ENCODE measurements at regions of chr1 and their contacts with region 1.

Region 1: DNA sequence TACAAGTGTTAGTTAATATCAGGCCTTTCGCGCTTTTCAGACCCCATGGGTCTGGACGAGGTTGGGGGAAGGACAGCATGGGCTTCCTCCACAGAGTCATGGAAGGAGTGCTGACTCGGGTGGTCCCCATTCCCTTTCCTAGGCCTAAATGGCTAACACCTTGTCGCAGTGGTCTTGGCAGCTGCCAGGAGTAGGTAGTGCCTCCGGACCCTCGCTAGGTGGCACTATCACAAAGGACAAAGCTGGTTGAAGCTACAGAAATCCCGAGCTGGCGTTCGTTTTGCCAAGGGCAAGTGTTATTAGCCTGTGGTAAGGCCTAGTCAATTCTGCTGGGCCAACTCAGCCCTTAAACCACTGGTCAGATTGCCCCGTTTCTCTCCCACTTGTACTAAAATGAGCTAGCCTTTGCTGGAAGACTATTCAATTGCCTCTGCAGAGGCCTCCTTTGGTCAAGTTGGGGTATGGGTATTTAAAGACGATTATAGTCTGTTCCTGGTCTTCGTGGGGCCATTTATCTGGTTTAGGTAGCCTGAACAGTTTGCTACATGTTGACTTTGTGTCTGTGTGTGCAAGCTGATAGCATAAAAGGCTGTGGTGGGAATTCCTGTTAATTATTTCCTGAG is 1.1 kb upstream of the UBE2Q1 start:
- DNase-seq: peak; percentile 85
- ATAC-seq: peak; percentile 80

Region 2: DNA sequence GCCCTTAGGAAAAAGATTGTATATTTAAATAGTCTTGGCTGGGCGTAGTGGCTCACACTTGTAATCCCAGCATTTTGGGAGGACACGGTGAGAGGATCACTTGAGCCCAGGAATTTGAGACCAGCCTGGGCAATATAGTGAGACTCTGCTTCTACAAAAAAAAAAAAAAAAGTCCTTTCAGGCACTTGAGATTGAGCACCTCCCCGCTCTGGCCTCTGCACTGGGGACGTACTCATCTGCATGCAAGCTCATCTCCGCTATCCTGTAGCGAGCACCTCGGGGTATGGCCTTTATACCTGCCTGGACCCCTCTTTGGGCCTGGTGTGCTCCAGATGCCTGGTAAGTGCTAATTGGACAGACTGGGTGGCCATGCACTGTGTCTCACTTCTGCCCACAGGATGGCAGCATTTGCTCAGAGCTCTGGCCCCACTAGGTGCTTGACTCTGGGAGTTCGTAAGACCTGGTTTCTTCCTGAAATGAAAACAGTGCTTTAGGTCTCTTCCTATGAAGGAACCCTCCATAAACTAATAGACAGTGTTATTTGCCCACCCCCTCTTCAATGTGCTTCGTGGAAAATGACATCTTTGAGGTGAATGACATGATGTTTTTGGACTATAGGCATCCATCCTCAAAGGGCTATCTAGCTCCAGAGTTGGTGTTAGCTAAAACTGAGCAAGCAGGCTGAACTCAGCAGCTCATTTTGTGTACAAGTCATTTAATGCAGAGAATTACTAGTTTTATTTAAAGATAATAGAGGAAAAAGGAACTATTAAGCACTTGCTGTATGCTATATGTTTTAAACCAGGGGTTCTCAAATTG is 110.1 kb after region 1 on chr1:
- intact Hi-C with region 1: loop called (anchors 10 kb)
- DNase-seq: peak; percentile 80
- ATAC-seq: peak; percentile 99

Region 3: GRCh38 chr1:154884869-154885701 is 325.5 kb after region 1 on chr1:
- intact Hi-C with region 1: loop called (anchors 5 kb)
- DNase-seq: no peak
- ATAC-seq: no peak